ENCODE measurements at regions of chr7 and their contacts with region 1.

Region 1: GRCh38 chr7:116525913-116526861 is 1.4 kb downstream of the CAV1 start:
- DNase-seq: no peak
- H3K4me3 ChIP-seq: peak overlapping the region; percentile 99
- CTCF ChIP-seq: peak; percentile 77

Region 2: DNA sequence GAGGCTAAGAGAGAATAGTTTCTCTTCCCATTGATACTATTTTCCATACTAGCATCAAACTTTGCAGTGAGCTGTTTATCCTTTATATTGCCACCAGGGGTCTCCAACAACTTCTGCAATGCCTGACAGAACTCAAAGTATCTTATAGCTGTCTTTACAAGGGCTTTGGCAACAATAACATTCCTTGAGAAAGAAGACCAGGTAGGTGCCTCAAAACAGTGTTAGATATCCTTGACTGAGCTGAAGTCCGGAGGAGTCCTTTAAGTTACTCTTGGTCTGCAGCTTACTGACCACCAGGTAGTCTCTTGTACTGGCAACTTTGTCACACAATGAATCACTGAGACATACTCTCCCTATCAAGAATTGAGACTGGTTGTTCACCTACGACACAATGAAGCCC is 345.9 kb before region 1 on chr7:
- CTCF ChIA-PET with region 1: interaction called, 12 read pairs
- POLR2A ChIA-PET with region 1: interaction called, 3 read pairs
- DNase-seq: no peak
- H3K4me3 ChIP-seq: no peak overlapping the region
- CTCF ChIP-seq: peak; percentile 66

Region 3: GRCh38 chr7:116258734-116259133 is 267.5 kb before region 1 on chr7:
- CTCF ChIA-PET with region 1: interaction called, 129 read pairs
- POLR2A ChIA-PET with region 1: interaction called, 36 read pairs
- DNase-seq: no peak
- H3K4me3 ChIP-seq: no peak overlapping the region
- CTCF ChIP-seq: peak; percentile 31

Region 4: DNA sequence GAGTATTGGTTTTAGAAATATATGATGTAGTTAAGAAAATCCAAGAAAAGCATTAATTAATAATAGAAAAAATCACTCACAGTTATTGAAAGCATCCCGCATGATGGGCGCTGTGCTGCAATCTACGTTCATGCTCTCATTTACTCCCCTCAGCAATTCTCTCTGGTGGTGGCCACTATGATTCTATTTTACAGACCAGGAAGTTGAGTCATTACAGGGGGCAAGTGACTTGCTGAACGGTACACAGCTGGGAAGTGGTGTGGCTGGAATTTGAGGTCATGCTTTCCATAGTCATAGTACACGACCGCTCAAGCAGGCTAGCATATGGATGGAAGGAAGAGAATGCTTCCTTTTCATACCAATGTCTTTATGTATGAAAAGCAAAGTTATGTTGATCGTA is 198.4 kb before region 1 on chr7:
- CTCF ChIA-PET with region 1: interaction called, 11 read pairs
- POLR2A ChIA-PET with region 1: interaction called, 3 read pairs
- DNase-seq: peak; percentile 95
- H3K4me3 ChIP-seq: no peak overlapping the region
- CTCF ChIP-seq: no peak

Region 5: GRCh38 chr7:116511552-116512519 is 14.4 kb before region 1 on chr7:
- CTCF ChIA-PET with region 1: interaction called, 14 read pairs
- POLR2A ChIA-PET with region 1: interaction called, 3 read pairs
- DNase-seq: no peak
- H3K4me3 ChIP-seq: peak overlapping the region; percentile 26
- CTCF ChIP-seq: no peak

Region 6: GRCh38 chr7:116582806-116583444 is 56.7 kb after region 1 on chr7:
- CTCF ChIA-PET with region 1: interaction called, 31 read pairs
- POLR2A ChIA-PET with region 1: interaction called, 23 read pairs
- DNase-seq: peak; percentile 91
- H3K4me3 ChIP-seq: no peak overlapping the region
- CTCF ChIP-seq: no peak